Cardiac septum (tissue), 1 donor: ENCODE measurements at regions of chr3 and their contacts with region 1.

Region 1: DNA sequence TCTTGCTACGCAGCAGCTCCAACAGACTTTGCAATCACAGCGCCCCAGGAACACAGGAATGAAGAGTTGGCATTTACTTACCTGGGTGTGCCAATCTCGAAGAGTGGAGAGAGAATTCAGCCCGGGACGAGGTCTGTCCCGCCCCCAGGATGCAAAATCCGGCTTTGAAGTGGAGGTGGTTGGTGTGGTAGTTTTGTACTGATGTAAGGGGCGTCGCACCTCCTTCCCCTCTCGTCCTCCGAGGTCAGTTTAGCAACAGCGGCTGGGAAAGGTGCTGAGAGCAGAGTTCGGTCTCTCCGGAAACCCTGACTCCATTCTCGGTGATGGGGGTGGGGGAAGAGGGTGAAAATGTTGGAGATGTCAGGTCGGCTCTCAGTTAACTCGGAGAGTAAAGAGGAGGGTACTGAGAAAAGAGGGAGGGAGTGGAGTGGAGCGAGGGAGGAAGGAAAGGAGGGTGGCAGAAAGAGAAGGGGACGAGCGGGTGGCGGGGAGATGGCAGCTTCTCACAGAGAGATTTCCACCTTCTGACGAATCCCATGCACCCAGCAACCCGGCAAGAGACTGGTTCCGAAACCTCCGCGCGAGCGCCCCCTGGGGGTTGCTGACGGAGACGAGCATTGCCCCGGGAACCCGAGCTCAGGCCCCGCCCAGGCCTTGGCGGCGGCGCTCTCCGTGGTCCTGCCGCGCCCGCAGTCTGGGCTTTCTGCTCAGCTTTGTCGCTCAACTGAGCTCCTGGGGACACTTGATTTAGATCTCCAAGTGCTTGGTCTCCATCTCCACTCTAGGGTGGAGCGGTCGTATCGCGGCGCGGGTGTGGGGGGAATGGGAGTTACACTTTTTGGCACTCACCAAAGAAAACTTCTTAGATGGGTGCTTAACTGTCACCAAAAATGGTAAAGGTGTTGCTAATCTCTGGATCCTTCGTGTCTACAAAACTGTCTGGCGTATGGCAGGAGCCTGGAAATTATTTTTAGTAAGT is at the start of gene CPNE4:
- DNase-seq: peak; percentile 88
- total RNA-seq, gene CPNE4: 7.4 TPM

Region 2: DNA sequence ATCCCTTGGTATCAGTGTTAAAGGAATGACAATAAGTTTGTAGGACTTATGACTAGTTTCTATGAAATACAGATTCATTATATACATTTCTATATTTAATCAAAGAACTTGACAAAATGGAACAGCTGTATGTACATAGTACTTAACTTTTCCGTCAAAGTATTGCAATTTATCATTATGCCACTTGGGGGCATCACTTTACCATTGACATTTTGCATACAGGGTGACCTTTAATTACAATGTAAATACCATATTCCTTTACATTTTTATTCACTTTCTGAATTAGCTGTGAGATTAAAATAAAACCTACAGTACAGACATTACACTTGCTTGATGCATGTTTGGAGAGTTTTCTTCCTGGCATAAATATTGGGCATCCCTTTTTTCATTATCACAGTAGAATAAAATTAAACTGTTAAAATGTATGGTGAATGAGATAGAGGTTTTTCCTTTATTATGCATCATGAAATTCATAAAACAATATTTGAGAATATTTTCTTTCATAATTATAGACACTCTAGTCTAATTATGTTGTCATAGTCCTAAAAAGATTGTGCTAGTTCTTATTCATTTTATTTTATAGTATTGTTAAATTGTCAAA is 1001.2 kb before region 1 on chr3:
- intact Hi-C with region 1: loop called (anchors 10 kb)
- DNase-seq: no peak

Region 3: GRCh38 chr3:132180337-132180791 is 145.6 kb after region 1 on chr3:
- intact Hi-C with region 1: loop called (anchors 5 kb)
- DNase-seq: no peak